CD4-positive, alpha-beta memory T cell (primary cell): ENCODE measurements at regions of chr7 and their contacts with region 1.

Region 1: GRCh38 chr7:151244196-151244840 is 4.2 kb downstream of the SMARCD3 start:
- DNase-seq: peak; percentile 54 to 62 (median 57)
- H3K4me3 ChIP-seq: peak overlapping the region in 1 of 2 donors; percentile 34
- H3K4me3 Mint-ChIP-seq: peak overlapping the region; percentile 45 to 84 (median 77)
- H3K27ac ChIP-seq: no peak overlapping the region
- H3K27ac Mint-ChIP-seq: peak overlapping the region in 6 of 7 donors; percentile 35 to 92 (median 84)
- H3K4me1 ChIP-seq: peaks cover 54% of the 10 kb centered on the region
- H3K4me1 Mint-ChIP-seq: peaks cover 19 to 56% (median 31%) of the 10 kb centered on the region in 4 donors
- H3K27me3 ChIP-seq: peaks cover 16% of the 10 kb centered on the region
- H3K27me3 Mint-ChIP-seq: peaks cover 11 to 18% of the 10 kb centered on the region in 2 donors

Region 2: GRCh38 chr7:151123822-151124464 is 120.4 kb before region 1 on chr7:
- CTCF ChIA-PET with region 1: interaction called, 8 read pairs
- POLR2A ChIA-PET with region 1: no interaction called
- intact Hi-C with region 1: loop called (anchors 1 kb)
- DNase-seq: peak; percentile 73 to 82 (median 80)
- H3K4me3 ChIP-seq: no peak overlapping the region
- H3K4me3 Mint-ChIP-seq: no peak overlapping the region
- H3K27ac ChIP-seq: no peak overlapping the region
- H3K27ac Mint-ChIP-seq: peak overlapping the region in 3 of 7 donors; percentile 31 to 70 (median 47)
- H3K4me1 ChIP-seq: peaks cover 4% of the 10 kb centered on the region
- H3K4me1 Mint-ChIP-seq: peaks cover 4 to 19% (median 10%) of the 10 kb centered on the region in 4 donors
- H3K27me3 ChIP-seq: no peaks in the 10 kb centered on the region
- H3K27me3 Mint-ChIP-seq: no peaks in the 10 kb centered on the region

Region 3: DNA sequence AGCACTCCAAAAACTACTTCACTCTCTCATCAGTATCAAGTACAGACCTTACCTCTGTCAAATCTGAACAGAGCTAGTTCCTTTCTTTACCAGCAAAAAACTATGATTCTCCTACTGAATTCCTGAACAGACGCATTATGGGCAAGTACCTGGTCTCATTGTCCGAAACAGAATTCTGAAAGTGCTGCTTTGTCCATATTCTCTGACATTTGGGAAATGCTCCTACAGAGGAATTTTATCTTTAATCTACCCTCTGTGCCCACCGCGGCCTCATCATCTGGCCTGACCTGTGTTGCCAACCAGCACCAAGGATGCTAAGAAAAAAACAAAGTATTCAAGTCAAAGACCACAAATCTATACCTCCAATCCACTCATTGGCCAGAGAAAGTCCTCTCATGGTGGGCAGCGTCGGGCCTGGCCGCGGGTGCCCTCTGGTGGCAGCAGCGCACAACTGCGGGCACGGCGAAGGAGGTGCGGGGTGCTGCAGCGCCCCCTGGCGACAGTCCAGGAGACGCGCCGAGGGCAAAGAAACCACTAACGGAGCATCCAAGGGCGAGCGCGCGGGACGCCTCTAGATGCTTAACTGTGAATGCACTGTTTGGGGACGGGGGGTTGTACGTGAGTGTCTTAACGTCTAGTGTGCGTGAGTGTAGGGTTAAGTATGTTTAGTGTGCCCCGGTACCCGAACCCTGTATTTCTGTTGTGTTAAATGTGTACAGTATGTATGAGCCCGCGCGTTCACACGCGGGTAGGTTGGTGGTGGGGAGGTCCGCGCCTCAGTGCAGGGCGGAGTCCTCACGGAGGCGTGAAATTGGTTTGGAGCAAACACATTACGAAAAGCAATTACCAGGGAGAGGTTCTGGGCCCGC is 71.8 kb before region 1 on chr7:
- CTCF ChIA-PET with region 1: interaction called, 20 read pairs
- POLR2A ChIA-PET with region 1: interaction called, 3 read pairs
- intact Hi-C with region 1: loop called (anchors 1 kb)
- DNase-seq: peak; percentile 72 to 80 (median 75)
- H3K4me3 ChIP-seq: no peak overlapping the region
- H3K4me3 Mint-ChIP-seq: peak overlapping the region in 1 of 8 donors; percentile 50
- H3K27ac ChIP-seq: no peak overlapping the region
- H3K27ac Mint-ChIP-seq: peak overlapping the region in 4 of 7 donors; percentile 41 to 65 (median 62)
- H3K4me1 ChIP-seq: no peaks in the 10 kb centered on the region
- H3K4me1 Mint-ChIP-seq: peaks cover 11 to 21% (median 16%) of the 10 kb centered on the region in 4 donors
- H3K27me3 ChIP-seq: peaks cover 14% of the 10 kb centered on the region
- H3K27me3 Mint-ChIP-seq: peaks cover 25 to 40% of the 10 kb centered on the region in 2 donors

Region 4: DNA sequence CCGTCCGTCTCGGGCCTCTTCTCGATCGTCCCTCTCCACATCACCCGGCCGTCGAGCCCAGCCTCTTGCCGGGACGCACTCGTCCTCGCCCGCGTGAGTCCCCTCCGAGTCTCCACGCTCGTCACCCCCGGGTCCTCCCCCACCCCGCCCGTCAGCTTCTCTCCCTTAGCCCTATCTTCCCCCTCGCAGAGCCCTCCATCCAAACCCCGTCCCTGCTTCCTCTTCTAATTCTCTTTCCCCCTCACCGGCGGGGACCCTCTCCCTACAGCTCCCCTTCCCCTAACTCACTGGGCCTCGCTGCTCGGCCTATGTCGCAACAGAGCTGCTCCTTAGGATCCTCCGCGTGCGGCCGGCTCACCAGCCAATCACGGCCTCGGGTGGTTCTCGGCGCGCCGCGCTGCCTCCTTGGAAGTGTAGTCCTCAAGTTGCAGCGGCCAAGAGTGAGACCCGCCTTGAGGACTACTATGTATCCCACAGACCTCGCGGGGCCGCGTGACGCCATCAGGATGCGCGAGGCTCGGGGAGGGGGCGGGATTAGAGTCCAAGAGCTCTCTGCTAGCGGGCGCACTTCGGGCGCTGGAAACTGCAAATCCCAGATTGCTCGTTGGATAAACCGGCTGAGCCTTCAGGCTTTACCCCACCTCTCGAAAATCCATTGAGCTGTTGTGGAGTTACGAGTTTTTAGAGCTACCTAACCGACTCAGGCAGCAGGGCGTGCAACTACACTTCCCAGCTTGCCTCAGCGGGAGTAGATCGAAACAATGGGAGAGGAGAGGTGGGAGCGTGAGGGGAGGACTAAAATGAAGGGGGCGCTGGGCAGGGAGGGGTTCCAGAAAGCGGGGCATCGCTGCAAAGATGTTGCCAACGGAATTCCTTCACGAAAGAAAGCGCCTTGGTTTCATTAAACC is 17.2 kb before region 1 on chr7 and contains the start of gene ABCF2:
- CTCF ChIA-PET with region 1: interaction called, 33 read pairs
- POLR2A ChIA-PET with region 1: interaction called, 50 read pairs
- intact Hi-C with region 1: loop called (anchors 1 kb)
- DNase-seq: peak; percentile 94 to 99 (median 95)
- H3K4me3 ChIP-seq: peak within 1 kb of the TSS; percentile 62 to 80
- H3K4me3 Mint-ChIP-seq: peak within 1 kb of the TSS; percentile 95 to 100 (median 96)
- H3K27ac ChIP-seq: peak within 1 kb of the TSS; percentile 83
- H3K27ac Mint-ChIP-seq: peak within 1 kb of the TSS; percentile 95 to 98 (median 96)
- H3K4me1 ChIP-seq: peaks cover 34% of the 10 kb centered on the region
- H3K4me1 Mint-ChIP-seq: peaks cover 29 to 52% (median 40%) of the 10 kb centered on the region in 4 donors
- H3K27me3 ChIP-seq: no peaks in the 10 kb centered on the region
- H3K27me3 Mint-ChIP-seq: no peaks in the 10 kb centered on the region
- total RNA-seq, gene ABCF2: 31.4 to 35.7 TPM

Region 5: DNA sequence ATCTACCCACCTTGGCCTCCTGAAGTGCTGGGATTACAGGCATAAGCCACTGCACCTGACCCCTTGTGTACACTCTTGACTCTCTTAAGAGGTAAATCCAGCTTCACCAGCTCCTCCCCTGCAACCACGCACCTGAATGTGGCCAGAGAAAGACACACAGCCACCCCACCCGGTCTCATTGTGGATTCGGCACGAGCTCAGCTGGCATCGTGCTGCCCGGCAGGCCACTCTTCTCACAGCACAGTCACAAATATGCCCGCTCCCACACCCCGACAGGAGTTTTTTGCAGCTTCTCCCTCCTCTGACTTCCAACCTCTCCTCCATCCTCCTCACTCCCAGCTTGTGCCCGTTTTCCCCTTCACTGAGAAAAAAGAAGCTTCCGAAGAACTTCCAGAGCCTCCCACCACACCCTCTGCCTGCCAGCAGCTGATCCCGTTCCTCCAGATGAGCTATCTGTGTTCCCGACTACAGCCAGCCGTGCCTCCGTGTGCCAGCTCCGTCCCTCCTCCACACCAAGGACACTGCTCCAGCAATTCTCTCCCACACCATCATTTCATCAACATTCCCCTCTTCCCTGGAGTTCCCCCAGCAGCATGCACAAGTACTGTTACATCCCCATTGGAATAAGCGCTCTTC is 12.2 kb after region 1 on chr7:
- CTCF ChIA-PET with region 1: interaction called, 11 read pairs
- POLR2A ChIA-PET with region 1: no interaction called
- intact Hi-C with region 1: no loop called
- DNase-seq: peak in 1 of 5 donors; percentile 3
- H3K4me3 ChIP-seq: no peak overlapping the region
- H3K4me3 Mint-ChIP-seq: no peak overlapping the region
- H3K27ac ChIP-seq: no peak overlapping the region
- H3K27ac Mint-ChIP-seq: no peak overlapping the region
- H3K4me1 ChIP-seq: peaks cover 7% of the 10 kb centered on the region
- H3K4me1 Mint-ChIP-seq: peaks cover 3 to 10% (median 7%) of the 10 kb centered on the region in 4 donors
- H3K27me3 ChIP-seq: peaks cover 11% of the 10 kb centered on the region
- H3K27me3 Mint-ChIP-seq: peaks cover 27 to 47% of the 10 kb centered on the region in 2 donors

Region 6: DNA sequence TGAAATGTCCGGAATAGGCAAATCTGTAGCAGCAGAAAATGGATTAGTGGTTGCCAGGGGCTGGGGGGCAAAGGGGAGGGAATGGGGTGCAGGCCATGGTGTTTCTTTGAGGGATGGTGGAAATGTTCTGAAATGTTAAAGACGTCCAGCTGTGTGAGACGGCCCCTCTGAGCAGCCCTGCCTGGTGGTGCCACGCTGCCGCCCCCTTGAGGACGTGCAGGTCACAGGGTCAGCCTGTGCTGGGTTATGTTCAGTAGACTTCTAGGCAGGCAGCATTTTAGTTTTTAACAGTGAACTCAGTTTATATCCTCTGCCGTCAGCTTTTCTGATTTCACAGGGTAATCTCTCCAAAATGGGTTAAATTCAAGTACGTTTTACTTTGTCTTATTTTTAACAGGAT is 106.7 kb after region 1 on chr7:
- CTCF ChIA-PET with region 1: no interaction called
- POLR2A ChIA-PET with region 1: interaction called, 3 read pairs
- intact Hi-C with region 1: loop called (anchors 2 kb)
- DNase-seq: no peak
- H3K4me3 ChIP-seq: no peak overlapping the region
- H3K4me3 Mint-ChIP-seq: peak overlapping the region; percentile 32 to 82 (median 73)
- H3K27ac ChIP-seq: peak overlapping the region; percentile 65
- H3K27ac Mint-ChIP-seq: peak overlapping the region; percentile 78 to 95 (median 89)
- H3K4me1 ChIP-seq: peaks cover 38% of the 10 kb centered on the region
- H3K4me1 Mint-ChIP-seq: peaks cover 33 to 61% (median 47%) of the 10 kb centered on the region in 4 donors
- H3K27me3 ChIP-seq: no peaks in the 10 kb centered on the region
- H3K27me3 Mint-ChIP-seq: no peaks in the 10 kb centered on the region

Region 7: DNA sequence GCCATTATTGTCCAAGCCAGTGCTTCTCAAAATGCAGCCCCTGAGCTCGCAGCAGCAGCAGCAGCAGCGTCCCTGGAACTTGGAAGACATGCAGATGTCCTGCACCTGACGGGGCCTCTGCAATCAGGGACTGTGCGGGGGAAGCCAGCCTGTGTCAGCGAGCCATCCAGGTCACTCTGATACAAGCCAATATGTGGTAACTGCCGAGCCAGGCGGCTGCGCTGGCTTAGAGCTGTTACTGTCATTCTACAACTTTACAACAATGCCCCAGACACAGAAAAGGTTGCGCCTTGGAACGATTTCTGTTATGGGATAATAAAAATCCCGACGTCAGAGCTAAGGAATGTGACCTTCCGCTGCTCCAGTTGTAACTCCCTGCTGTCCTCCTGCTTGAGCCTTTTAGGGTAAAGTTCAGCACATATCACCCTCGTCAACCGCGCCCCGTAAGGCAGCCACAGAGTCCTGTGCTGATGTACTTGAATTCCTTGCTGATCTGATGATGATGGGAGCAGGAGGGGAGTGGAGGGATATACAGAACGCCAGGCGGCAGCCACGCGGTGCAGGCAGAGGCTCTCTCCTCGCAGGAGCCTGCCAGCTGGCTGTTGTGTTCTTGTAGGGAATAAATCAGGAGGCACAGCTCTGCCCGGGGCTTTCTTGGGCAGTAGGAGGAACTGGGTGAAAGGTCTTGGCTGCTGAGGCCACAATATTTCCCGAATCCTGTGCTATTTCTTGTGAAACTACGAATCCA is 215.6 kb after region 1 on chr7:
- CTCF ChIA-PET with region 1: no interaction called
- POLR2A ChIA-PET with region 1: no interaction called
- intact Hi-C with region 1: no loop called
- DNase-seq: no peak
- H3K4me3 ChIP-seq: no peak overlapping the region
- H3K4me3 Mint-ChIP-seq: no peak overlapping the region
- H3K27ac ChIP-seq: no peak overlapping the region
- H3K27ac Mint-ChIP-seq: no peak overlapping the region
- H3K4me1 ChIP-seq: no peaks in the 10 kb centered on the region
- H3K4me1 Mint-ChIP-seq: peaks cover 0 to 5% (median 5%) of the 10 kb centered on the region in 4 donors
- H3K27me3 ChIP-seq: no peaks in the 10 kb centered on the region
- H3K27me3 Mint-ChIP-seq: peaks cover 0 to 2% of the 10 kb centered on the region in 2 donors